ENCODE measurements at regions of chr2 and their contacts with region 1.

Region 1: DNA sequence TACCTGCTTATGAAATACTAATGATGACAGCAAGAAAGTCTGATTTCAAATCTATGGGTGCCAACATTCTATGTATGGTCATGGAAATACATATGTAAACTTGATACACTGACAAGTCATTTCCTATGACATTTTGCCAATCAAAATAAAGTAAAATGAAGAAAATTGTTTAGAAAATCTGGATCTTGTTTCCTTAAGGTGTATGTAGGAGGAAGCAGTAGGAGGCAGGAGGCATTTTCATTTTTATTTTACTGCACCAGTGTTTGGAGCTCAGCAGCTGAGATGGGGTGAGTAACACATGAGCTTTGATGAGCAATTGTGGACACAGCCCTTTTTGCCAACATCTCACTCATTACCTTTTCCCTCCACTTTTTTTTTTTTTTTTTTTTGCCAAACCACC is 167.0 kb downstream of the AFF3 start:
- DNase-seq: no peak
- H3K4me3 ChIP-seq: no peak overlapping the region
- H3K27me3 ChIP-seq: no peaks in the 10 kb centered on the region
- CTCF ChIP-seq: no peak

Region 2: GRCh38 chr2:99756059-99756458 is 219.3 kb before region 1 on chr2:
- CTCF ChIA-PET with region 1: no interaction called
- POLR2A ChIA-PET with region 1: interaction called, 14 read pairs
- DNase-seq: no peak
- H3K4me3 ChIP-seq: no peak overlapping the region
- H3K27me3 ChIP-seq: no peaks in the 10 kb centered on the region
- CTCF ChIP-seq: no peak

Region 3: DNA sequence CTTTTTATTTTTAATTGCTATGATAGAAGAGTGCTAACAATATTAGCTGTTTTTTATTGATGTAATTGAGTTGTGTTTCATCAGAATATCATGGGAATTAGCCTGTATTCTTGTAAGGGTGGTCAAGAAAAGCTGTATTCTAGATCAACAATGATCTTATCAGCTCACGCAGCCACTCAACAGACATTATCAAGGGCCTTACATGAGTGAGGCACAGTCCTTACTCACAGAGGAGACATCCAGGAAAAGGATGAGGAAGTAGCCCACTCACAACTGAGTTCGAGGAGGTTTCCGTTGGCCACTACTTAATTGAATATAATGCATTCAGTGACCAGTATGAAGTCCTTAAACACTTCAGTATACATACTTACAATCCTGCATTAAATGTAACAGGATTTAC is 14.5 kb after region 1 on chr2:
- CTCF ChIA-PET with region 1: no interaction called
- POLR2A ChIA-PET with region 1: no interaction called
- DNase-seq: no peak
- H3K4me3 ChIP-seq: no peak overlapping the region
- H3K27me3 ChIP-seq: no peaks in the 10 kb centered on the region
- CTCF ChIP-seq: no peak

Region 4: GRCh38 chr2:100039291-100039980 is 64.0 kb after region 1 on chr2:
- CTCF ChIA-PET with region 1: no interaction called
- POLR2A ChIA-PET with region 1: no interaction called
- DNase-seq: no peak
- H3K4me3 ChIP-seq: no peak overlapping the region
- H3K27me3 ChIP-seq: no peaks in the 10 kb centered on the region
- CTCF ChIP-seq: no peak